Colonic mucosa (tissue), 4 donors: ENCODE measurements at regions of chr14 and their contacts with region 1.

Region 1: GRCh38 chr14:105971593-105972500 is 445.5 kb downstream of the TMEM121 start:
- DNase-seq: no peak
- H3K4me3 ChIP-seq: no peak overlapping the region
- H3K27ac ChIP-seq: no peak overlapping the region
- H3K4me1 ChIP-seq: no peaks in the 10 kb centered on the region
- H3K27me3 ChIP-seq: no peaks in the 10 kb centered on the region
- CTCF ChIP-seq: no peak

Region 2: GRCh38 chr14:105999361-106000028 is 27.6 kb after region 1 on chr14:
- intact Hi-C with region 1: loop called (anchors 2 kb)
- DNase-seq: peak; percentile 61
- H3K4me3 ChIP-seq: no peak overlapping the region
- H3K27ac ChIP-seq: no peak overlapping the region
- H3K4me1 ChIP-seq: no peaks in the 10 kb centered on the region
- H3K27me3 ChIP-seq: no peaks in the 10 kb centered on the region
- CTCF ChIP-seq: peak; percentile 35